Transverse colon (tissue), 4 donors: ENCODE measurements at regions of chr3 and their contacts with region 1.

Region 1: DNA sequence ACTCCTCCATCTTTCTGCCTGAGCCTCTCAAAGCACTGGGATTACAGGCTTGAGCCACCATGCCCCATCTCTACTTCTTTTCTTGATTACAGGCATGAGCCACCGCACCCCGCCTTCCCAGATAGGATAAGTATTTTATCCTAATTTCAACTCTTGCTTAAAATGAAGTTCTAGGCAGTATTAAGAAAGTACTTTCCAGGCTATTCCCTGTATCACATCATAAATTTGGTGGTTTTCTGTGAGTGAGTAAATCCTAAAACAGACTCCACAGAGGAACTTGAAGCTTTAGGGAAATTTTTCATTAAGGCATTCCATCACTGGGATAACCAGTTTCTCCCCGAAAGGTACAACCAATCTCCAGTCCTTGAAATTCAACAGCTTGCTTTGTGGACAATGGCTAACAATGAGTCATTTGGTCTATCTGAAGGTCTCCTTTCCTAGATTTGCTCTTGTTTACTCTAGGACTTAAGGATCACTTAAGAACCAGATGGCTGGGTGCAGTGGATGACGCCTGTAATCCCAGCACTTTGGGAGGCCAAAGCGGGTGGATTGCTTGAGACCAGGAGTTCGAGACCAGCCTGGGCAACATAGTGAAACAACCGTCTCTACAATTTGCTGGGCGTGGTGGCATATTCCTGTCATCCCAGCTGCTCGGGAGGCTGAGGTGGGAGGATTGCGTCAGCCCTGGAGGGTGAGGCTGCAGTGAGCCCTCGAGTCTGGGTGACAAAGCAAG is 49.7 kb upstream of the SKIL start:
- DNase-seq: no peak
- H3K4me3 ChIP-seq: no peak overlapping the region
- H3K27ac ChIP-seq: no peak overlapping the region
- H3K4me1 ChIP-seq: peaks cover 0 to 4% (median 0%) of the 10 kb centered on the region in 4 donors
- H3K27me3 ChIP-seq: no peaks in the 10 kb centered on the region
- CTCF ChIP-seq: no peak
- EP300 ChIP-seq: no peak
- POLR2A ChIP-seq: no peak

Region 2: DNA sequence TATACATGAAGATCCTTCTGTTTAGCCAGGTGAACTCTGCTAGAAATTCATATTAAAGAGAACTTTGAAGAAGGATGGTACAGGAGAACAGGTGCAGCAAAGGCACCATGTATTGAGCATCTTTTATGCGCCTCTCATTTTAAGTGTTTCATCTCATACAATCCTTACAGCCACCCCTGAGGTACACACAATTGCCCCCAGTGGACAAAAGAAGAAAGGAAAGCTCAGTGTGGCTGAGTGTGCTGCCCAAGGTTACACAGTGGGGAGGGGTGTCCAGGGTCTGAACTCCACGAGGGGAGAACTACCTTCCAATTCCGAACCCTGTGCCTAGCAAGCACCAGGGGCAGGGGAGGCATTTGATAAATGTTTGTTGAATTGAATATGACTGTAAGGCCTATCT is 743.0 kb before region 1 on chr3:
- in situ Hi-C with region 1: no loop called
- intact Hi-C with region 1: no loop called
- DNase-seq: no peak
- H3K4me3 ChIP-seq: no peak overlapping the region
- H3K27ac ChIP-seq: no peak overlapping the region
- H3K4me1 ChIP-seq: no peaks in the 10 kb centered on the region
- H3K27me3 ChIP-seq: no peaks in the 10 kb centered on the region
- CTCF ChIP-seq: peak in 2 of 5 experiments; percentile 7 to 10
- EP300 ChIP-seq: no peak
- POLR2A ChIP-seq: no peak

Region 3: DNA sequence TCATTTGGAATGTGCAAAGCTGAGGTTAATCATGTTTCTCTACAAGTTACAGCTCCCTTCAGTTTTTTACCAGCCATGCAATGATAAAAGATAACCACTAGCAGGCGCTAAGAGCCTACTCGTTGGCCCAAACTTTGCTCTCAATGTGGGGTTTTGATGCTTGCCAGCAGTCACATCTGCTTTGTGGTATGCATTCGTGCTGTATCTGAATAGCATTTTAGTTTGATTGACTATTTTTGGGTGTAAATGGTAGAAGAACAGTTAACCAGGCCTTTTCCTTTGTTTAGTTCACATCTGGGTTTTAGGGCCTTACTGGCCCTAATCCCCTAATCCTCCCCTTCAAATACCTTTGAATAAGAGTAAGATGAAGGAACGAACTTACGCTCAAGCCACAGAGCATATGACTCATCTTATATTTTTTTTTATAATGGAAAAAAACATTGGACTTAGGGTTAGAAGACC is 106.4 kb after region 1 on chr3:
- in situ Hi-C with region 1: loop called in 3 of 4 experiments (anchors 10 to 25 kb)
- intact Hi-C with region 1: no loop called
- DNase-seq: no peak
- H3K4me3 ChIP-seq: no peak overlapping the region
- H3K27ac ChIP-seq: no peak overlapping the region
- H3K4me1 ChIP-seq: peaks cover 4 to 12% (median 11%) of the 10 kb centered on the region in 4 donors
- H3K27me3 ChIP-seq: peaks cover 34% of the 10 kb centered on the region
- CTCF ChIP-seq: peak; percentile 86 to 96 (median 89)
- EP300 ChIP-seq: no peak
- POLR2A ChIP-seq: no peak

Region 4: GRCh38 chr3:170689893-170690660 is 382.2 kb after region 1 on chr3:
- in situ Hi-C with region 1: loop called in 1 of 4 experiments (anchors 25 kb)
- intact Hi-C with region 1: no loop called
- DNase-seq: peak; percentile 65
- H3K4me3 ChIP-seq: no peak overlapping the region
- H3K27ac ChIP-seq: no peak overlapping the region
- H3K4me1 ChIP-seq: no peaks in the 10 kb centered on the region
- H3K27me3 ChIP-seq: no peaks in the 10 kb centered on the region
- CTCF ChIP-seq: peak; percentile 64 to 73 (median 71)
- EP300 ChIP-seq: no peak
- POLR2A ChIP-seq: no peak

Region 5: GRCh38 chr3:170811928-170812591 is 504.2 kb after region 1 on chr3:
- in situ Hi-C with region 1: loop called in 3 of 4 experiments (anchors 25 kb)
- intact Hi-C with region 1: no loop called
- DNase-seq: peak; percentile 76
- H3K4me3 ChIP-seq: no peak overlapping the region
- H3K27ac ChIP-seq: no peak overlapping the region
- H3K4me1 ChIP-seq: peaks cover 4 to 28% (median 8%) of the 10 kb centered on the region in 4 donors
- H3K27me3 ChIP-seq: no peaks in the 10 kb centered on the region
- CTCF ChIP-seq: peak; percentile 80 to 98 (median 96)
- EP300 ChIP-seq: no peak
- POLR2A ChIP-seq: no peak

Region 6: GRCh38 chr3:170848292-170848917 is 540.6 kb after region 1 on chr3:
- in situ Hi-C with region 1: loop called in 1 of 4 experiments (anchors 25 kb)
- intact Hi-C with region 1: no loop called
- DNase-seq: no peak
- H3K4me3 ChIP-seq: no peak overlapping the region
- H3K27ac ChIP-seq: no peak overlapping the region
- H3K4me1 ChIP-seq: no peaks in the 10 kb centered on the region
- H3K27me3 ChIP-seq: peaks cover 3% of the 10 kb centered on the region
- CTCF ChIP-seq: peak in 2 of 5 experiments; percentile 24 to 30
- EP300 ChIP-seq: no peak
- POLR2A ChIP-seq: no peak

Region 7: DNA sequence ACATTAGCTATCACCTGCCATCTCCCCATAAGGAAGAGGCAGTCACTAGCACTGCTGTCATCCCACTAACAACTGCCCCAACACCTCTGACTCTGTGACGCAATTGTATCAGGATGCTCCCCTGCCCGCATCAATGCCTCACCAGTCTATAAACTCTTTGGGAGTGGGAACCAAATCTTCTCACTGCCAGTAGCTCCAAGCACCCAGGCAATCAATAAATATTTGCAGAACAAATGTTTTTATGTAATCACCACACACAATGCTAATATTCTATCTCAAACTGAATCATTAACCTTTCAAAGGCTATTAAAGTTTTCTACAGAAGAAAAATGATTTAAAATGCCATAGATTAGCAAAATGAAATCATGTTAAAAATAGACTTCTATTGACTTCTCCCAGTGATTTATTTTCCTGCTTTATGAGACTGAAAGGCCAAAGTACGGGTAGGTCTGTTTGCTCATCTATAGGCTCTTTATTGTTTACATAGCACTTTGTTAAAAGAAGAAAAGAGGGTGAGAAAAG is 1371.2 kb after region 1 on chr3:
- in situ Hi-C with region 1: no loop called
- intact Hi-C with region 1: no loop called
- DNase-seq: peak; percentile 45
- H3K4me3 ChIP-seq: no peak overlapping the region
- H3K27ac ChIP-seq: peak overlapping the region; percentile 68 to 80 (median 70)
- H3K4me1 ChIP-seq: peaks cover 3 to 47% (median 28%) of the 10 kb centered on the region in 4 donors
- H3K27me3 ChIP-seq: no peaks in the 10 kb centered on the region
- CTCF ChIP-seq: no peak
- EP300 ChIP-seq: no peak
- POLR2A ChIP-seq: no peak